ENCODE measurements at regions of chr11 and their contacts with region 1.

Region 1: DNA sequence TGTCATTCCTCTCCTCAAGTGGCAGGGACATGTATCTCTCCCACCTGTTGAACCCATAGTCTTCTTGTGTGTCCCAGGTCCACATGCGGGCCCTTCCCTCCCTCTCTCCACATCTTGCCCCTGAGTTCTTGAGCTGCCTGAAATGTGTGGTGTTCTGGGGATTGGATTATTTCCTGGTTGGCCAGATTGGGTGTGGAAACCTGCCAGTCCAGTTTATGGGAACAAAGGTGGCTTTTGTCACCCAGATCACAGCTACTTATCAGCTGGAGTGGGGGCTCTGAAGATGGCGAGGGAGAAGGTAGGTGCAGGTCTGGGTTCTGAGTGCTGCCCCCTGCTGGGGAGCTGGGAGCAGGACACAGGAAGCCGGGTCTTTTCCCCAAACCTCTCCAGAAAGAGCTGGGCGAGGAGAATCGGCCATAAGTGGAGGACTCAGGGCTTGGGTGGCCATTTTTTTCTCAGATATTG is 14.2 kb downstream of the DTX4 start:
- DNase-seq: peak; percentile 24 to 41
- ATAC-seq: peak in 1 of 2 experiments; percentile 87; a peak in 3 of 6 replicates
- H3K4me3 ChIP-seq: no peak overlapping the region
- H3K27ac ChIP-seq: no peak overlapping the region
- H3K4me1 ChIP-seq: peaks cover 5% of the 10 kb centered on the region; the same call in 1 of the 3 replicates
- CTCF ChIP-seq: peak; percentile 33; the same call in 2 of the 3 replicates
- EP300 ChIP-seq: no peak
- POLR2A ChIP-seq: no peak
- RAD21 ChIP-seq: no peak

Region 2: DNA sequence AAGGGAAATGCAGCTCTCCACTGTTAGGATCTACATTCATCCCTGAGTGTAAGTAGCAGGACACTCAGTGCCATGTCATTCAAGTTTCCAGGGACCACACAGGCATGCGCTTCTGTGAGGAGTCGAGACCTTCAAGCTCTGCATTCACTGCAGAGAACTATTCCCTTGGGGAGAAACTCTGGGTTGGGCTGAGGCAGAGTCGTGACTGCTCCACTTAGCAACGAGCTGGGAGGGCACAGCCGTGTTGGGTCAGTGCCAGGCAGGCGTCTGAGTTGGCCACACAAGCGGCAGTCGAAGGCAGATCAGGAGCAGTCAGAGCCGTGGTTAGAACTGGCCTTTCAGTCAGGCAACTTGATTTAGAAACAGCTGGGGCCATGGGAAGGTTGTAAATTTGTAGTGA is 11.8 kb after region 1 on chr11:
- CTCF ChIA-PET with region 1: interaction called, 14 read pairs
- POLR2A ChIA-PET with region 1: no interaction called
- DNase-seq: no peak
- ATAC-seq: no peak
- H3K4me3 ChIP-seq: no peak overlapping the region
- H3K27ac ChIP-seq: no peak overlapping the region
- H3K4me1 ChIP-seq: no peaks in the 10 kb centered on the region
- CTCF ChIP-seq: no peak
- EP300 ChIP-seq: no peak
- POLR2A ChIP-seq: no peak
- RAD21 ChIP-seq: no peak